ENCODE measurements at regions of chr6 and their contacts with region 1.

Region 1: GRCh38 chr6:161370880-161371279 is 97.0 kb upstream of the AGPAT4 start:
- DNase-seq: peak; percentile 56 to 96 (median 72)

Region 2: DNA sequence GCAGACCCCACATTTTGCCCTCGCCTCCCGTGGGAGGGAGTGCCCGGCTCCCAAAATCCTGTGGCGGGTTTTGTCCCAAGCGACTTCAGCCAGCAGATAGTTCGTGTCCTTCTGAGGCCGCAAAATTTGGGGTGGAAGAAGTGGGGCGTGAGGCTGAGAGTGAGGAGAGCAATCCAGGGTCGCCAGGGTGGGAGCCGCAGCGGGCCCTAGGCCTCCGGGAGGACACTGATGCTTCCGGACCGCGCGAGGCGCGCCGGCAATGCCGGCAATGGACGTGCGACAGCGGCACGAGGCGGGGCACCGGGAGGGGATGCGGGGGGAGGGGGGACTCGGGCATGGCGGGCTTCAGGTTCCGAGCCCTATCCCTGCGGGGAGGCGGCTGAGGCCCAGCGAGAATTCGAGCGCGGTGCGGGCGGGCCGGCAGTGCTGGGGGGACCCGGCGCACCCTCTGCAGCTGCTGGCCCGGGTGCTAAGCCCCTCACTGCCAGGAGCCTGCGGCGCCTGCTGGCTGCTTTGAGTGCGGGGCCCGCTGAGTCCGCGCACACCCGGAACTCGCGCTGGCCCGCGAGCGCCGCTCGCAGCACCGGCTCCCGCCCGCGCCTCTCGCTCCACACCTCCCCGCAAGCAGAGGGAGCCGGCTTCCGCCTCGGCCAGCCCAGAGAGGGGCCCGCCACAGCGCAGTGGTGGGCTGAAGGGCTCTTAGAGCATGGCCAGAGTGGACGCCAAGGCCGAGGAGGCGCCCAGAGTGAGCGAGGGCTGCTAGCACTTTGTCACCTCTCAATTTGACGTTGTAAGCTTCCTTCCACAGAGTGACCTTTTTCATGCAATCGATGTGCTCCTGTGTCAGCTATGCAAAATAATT is 850.6 kb before region 1 on chr6:
- intact Hi-C with region 1: loop called (anchors 5 kb)
- DNase-seq: peak; percentile 76 to 97 (median 85)

Region 3: GRCh38 chr6:160992061-160992979 is 378.6 kb before region 1 on chr6:
- intact Hi-C with region 1: loop called (anchors 5 kb)
- DNase-seq: peak; percentile 38 to 92 (median 50)

Region 4: DNA sequence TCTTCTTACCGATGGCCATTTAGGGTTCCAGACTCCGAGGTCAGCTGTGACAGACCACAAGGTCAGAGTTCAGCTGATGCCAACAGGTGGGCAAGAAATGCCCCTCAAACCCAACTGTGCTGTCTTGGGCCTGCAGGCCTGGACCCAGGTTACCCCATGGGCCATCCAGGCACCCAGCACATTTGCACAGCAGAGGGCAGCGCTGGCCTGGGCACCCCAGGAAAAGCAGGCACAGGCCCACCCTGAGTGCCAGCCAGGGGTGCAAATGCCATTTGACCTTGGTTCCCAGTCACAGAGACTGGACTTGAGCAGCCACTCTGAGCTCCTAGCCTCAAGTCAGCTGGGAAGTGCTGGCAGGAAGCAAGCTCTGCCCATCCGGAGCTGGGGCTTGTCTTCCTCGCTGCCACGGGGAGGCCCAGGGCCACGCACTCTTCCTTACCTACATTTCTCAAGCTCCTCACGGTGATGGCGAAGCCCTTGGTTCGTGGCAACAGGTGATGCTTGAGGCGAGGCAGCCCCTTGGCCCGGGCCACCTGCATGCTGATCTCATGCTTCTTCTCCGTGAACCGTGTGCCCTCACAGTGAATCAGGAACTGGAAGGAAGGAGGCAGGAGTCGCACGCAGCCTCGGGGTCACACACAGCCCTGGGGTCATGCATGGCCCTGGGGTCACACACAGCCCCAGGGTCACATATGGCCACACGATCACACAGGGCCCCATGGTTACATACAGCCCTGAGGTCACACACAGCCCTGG is 217.8 kb before region 1 on chr6:
- intact Hi-C with region 1: loop called (anchors 5 kb)
- DNase-seq: peak in 4 of 10 donors; percentile 5 to 89 (median 70)

Region 5: DNA sequence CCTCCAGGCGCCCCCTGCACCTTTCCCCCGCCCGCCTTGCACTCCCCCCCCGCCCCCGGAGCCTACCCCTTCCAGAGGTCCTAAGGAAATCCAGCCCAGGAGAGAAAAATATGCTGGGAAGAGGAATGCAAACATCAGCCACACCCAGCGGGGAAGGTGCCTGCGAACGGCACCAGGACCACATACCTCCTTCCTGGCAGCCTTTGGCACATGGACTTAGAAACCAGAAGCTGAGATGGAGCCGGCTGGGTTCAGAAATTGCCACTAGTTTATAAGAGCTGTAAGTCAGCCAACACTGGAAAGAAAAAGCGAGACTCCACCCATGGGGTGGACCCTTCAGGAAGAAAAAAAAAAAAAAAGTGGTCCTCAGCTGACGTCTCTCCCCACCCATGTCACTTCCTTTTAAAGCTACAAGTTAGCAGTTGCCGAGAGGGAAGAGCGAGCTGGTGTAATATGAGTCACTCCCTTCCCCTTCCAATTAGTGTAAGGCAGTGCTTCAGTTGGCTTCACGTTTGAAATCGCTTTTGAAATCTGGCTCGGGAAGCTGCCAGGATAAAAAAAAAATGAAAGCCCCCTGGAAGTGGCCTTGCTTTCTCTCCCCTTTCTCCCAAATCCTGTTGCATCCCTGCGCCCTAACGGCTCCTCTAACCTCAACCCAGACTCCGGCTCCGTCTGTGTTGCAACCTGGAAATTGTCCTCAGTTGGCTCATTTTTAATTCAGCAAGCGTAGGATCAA is 97.0 kb before region 1 on chr6 and contains the start of gene AGPAT4:
- intact Hi-C with region 1: loop called (anchors 5 kb)
- DNase-seq: peak in 5 of 10 donors; percentile 37 to 91 (median 45)

Region 6: GRCh38 chr6:161418463-161418945 is 47.6 kb after region 1 on chr6:
- intact Hi-C with region 1: no loop called
- DNase-seq: peak in 1 of 10 donors; percentile 54